ENCODE measurements at regions of chr14 and their contacts with region 1.

Region 1: DNA sequence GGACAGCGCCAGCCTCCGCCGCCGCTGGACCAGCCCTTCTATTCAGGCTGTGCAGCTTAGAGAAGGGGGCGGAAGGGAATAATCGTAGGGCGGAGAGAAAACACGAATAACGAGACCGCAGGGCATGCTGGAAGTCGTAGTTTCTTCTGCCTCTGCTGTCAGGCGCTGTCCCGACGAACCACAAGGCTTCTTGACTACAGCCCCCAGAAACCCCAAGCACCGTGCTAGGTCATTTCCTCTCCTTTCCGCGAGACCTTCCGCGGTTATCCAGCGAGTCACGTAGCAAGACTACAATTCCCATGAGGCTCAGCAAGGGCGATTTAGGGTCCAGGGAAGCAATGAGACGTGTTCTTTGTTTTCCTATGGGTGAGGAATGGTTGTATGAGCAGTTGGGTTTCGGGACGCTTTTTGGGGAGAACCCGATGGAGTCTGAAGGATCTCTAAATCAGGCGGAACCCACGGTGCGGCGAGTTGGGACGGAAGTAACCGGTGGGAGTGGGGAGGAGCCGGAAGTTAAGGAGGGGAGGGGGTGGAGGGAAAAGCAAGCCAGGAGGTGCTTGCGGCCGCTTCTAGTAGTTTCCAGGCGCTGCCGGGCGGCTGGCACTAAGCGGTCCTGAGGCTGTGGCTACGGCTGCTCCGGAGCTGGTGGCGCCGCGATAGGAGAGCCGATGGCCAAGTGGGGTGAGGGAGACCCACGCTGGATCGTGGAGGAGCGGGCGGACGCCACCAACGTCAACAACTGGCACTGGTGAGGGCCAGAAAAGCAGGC is at the starts of genes AHSA1 and VIPAS39:
- DNase-seq: peak; percentile 98
- ATAC-seq: peak; percentile 92
- H3K4me3 Mint-ChIP-seq: peak within 1 kb of the TSS; percentile 100
- H3K27ac Mint-ChIP-seq: peak within 1 kb of the TSS; percentile 100
- H3K4me1 Mint-ChIP-seq: peaks cover 26% of the 10 kb centered on the region
- H3K27me3 Mint-ChIP-seq: no peaks in the 10 kb centered on the region
- total RNA-seq, gene AHSA1: 252 to 273 TPM
- total RNA-seq, gene VIPAS39: 18.4 to 19.3 TPM

Region 2: DNA sequence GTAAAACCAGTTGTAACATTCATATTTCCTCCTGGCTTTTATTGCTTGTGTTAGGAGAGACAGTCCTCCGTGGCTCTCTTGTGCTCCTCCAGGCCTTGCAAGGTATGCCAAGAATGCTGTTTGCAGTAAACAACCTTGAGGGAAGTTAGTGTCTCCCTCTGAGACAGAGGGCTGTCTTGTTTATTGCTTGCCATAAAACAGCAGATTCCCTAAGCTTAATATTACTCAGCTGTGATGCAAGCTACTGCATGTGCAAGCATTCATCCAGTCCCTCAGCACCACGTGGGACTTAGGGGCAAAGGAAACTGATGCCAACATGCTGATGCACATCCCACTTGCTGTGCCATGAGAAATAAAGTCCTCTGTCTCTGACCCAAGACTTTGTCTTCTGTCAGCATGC is 143.7 kb before region 1 on chr14:
- CTCF ChIA-PET with region 1: interaction called, 11 read pairs
- POLR2A ChIA-PET with region 1: no interaction called
- DNase-seq: no peak
- ATAC-seq: no peak
- H3K4me3 Mint-ChIP-seq: no peak overlapping the region
- H3K27ac Mint-ChIP-seq: no peak overlapping the region
- H3K4me1 Mint-ChIP-seq: peaks cover 4% of the 10 kb centered on the region
- H3K27me3 Mint-ChIP-seq: no peaks in the 10 kb centered on the region

Region 3: DNA sequence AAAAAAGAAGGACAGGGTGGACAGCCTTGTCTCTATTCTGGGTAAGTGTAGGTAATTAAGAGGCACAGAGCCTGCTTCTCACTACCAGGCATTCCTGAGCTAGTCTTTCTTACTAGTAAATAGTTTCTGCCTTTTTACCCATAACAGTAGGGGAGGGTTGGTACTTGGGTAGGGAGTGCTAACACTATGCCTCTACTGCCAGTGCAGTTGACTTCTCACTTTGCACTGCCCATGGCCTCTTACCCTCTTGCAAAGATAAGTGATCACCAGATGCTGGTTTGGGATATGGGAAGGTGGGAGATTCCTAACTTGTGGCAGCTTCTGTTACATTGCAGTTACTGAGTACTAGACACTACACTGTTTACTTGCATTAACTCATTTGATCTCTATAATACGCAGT is 11.8 kb after region 1 on chr14:
- CTCF ChIA-PET with region 1: interaction called, 11 read pairs
- POLR2A ChIA-PET with region 1: no interaction called
- DNase-seq: no peak
- ATAC-seq: no peak
- H3K4me3 Mint-ChIP-seq: no peak overlapping the region
- H3K27ac Mint-ChIP-seq: no peak overlapping the region
- H3K4me1 Mint-ChIP-seq: no peaks in the 10 kb centered on the region
- H3K27me3 Mint-ChIP-seq: no peaks in the 10 kb centered on the region

Region 4: GRCh38 chr14:77542421-77543239 is 84.9 kb after region 1 on chr14:
- CTCF ChIA-PET with region 1: interaction called, 12 read pairs
- POLR2A ChIA-PET with region 1: no interaction called
- DNase-seq: no peak
- ATAC-seq: peak; percentile 39
- H3K4me3 Mint-ChIP-seq: no peak overlapping the region
- H3K27ac Mint-ChIP-seq: peak overlapping the region; percentile 63
- H3K4me1 Mint-ChIP-seq: peaks cover 27% of the 10 kb centered on the region
- H3K27me3 Mint-ChIP-seq: no peaks in the 10 kb centered on the region

Region 5: DNA sequence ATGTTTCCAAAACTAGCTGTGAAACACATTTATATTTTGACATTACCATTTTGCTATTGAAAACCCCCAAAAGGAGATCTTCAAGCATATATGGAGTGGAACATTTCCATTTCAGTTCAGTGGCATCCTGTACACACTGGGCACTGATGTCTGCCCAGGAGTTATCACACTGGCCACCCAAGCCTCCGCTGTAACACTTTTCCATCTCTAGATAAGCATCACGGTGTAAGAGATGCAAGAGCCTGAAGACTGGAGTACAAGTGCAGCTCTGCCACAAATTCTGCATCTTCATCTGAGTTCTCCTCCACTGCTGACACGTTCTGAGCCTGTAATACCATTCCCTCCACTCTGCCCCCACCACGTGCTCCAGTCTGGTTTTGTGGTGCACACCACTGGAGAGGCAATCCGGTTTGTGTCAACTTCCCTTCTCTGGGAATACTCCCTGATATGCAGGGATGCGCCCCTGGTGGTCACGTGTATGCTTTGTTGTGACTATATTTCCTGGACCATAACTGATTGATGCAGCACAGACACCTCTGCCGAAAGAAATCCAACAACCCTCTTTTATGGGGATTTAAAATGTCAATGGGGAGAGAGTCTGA is 146.0 kb after region 1 on chr14:
- CTCF ChIA-PET with region 1: interaction called, 10 read pairs
- POLR2A ChIA-PET with region 1: no interaction called
- DNase-seq: no peak
- ATAC-seq: no peak
- H3K4me3 Mint-ChIP-seq: no peak overlapping the region
- H3K27ac Mint-ChIP-seq: peak overlapping the region; percentile 32
- H3K4me1 Mint-ChIP-seq: peaks cover 84% of the 10 kb centered on the region
- H3K27me3 Mint-ChIP-seq: no peaks in the 10 kb centered on the region